Activated naive CD4-positive, alpha-beta T cell treated with anti-CD3 and anti-CD28 coated beads for 36 hours (primary cell): ENCODE measurements at regions of chr13 and their contacts with region 1.

Region 1: GRCh38 chr13:99307648-99308339 is 595 bp upstream of the GPR183 start:
- DNase-seq: peak; percentile 89
- H3K4me3 Mint-ChIP-seq: peak overlapping the region; percentile 93
- H3K27ac Mint-ChIP-seq: peak overlapping the region; percentile 99
- H3K4me1 Mint-ChIP-seq: peaks cover 73% of the 10 kb centered on the region
- H3K27me3 Mint-ChIP-seq: no peaks in the 10 kb centered on the region

Region 2: DNA sequence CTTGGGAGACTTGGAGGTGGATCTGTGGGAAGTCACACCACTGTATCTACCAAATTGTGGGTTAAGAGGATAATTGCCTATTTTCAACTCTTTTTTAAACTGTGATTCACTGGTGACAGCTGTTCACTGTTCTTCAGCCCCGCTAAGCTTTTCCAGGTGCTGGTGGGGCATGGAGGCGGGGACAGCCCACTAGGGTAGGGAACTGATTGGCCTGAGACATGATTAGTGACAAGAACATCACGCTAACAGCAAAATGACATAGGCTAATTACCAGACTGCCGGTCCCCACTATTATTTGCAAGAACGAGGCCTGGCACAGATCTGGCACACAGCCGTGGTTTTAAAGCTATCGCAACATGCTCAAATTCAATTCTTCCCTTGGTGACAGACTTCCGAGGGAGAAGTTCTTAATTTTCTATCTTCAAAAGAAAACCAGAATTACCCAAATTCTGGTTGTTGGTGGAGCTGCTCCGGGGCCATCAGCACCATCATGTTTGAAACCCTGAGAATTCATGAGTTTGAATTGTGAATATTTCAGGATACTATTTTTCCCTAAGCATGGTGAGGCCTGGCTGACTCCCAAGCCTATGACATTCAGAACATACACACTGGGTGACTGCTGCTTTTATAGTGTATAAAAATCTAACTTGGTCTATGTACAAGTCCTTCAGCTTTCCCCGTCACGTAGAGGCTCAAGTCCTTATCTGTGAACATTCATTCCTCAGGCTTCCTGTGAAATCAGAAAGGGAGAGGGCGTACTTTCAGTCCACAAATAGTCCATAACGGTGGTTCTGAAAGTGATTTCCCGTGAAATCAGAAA is 347.8 kb before region 1 on chr13:
- CTCF ChIA-PET with region 1: no interaction called
- intact Hi-C with region 1: no loop called
- DNase-seq: no peak
- H3K4me3 Mint-ChIP-seq: no peak overlapping the region
- H3K27ac Mint-ChIP-seq: no peak overlapping the region
- H3K4me1 Mint-ChIP-seq: peaks cover 11% of the 10 kb centered on the region
- H3K27me3 Mint-ChIP-seq: no peaks in the 10 kb centered on the region

Region 3: DNA sequence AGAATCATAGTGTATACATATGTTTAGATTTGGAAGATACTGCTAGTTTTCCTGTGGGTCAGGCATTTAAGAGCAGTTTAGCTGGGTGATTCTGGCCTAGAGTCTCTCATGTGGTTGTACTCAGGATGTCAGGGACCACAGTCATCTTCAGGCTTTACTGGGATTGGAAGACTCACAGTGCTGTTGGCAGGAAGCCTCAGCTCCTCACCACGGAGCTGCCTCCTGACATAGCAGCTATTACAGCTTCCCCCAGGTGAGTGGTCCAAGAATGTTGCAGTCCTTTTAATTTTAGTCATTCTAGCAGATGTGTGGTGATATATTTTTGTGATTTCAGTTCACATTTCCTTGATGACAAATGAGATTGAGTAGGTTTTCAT is 32.7 kb before region 1 on chr13:
- CTCF ChIA-PET with region 1: interaction called, 21 read pairs
- intact Hi-C with region 1: loop called (anchors 1 kb)
- DNase-seq: peak; percentile 76
- H3K4me3 Mint-ChIP-seq: no peak overlapping the region
- H3K27ac Mint-ChIP-seq: peak overlapping the region; percentile 54
- H3K4me1 Mint-ChIP-seq: peaks cover 93% of the 10 kb centered on the region
- H3K27me3 Mint-ChIP-seq: no peaks in the 10 kb centered on the region

Region 4: GRCh38 chr13:99296398-99296797 is 11.4 kb before region 1 on chr13:
- CTCF ChIA-PET with region 1: interaction called, 7 read pairs
- intact Hi-C with region 1: loop called (anchors 1 kb)
- DNase-seq: no peak
- H3K4me3 Mint-ChIP-seq: peak overlapping the region; percentile 48
- H3K27ac Mint-ChIP-seq: peak overlapping the region; percentile 87
- H3K4me1 Mint-ChIP-seq: peaks cover 75% of the 10 kb centered on the region
- H3K27me3 Mint-ChIP-seq: no peaks in the 10 kb centered on the region

Region 5: DNA sequence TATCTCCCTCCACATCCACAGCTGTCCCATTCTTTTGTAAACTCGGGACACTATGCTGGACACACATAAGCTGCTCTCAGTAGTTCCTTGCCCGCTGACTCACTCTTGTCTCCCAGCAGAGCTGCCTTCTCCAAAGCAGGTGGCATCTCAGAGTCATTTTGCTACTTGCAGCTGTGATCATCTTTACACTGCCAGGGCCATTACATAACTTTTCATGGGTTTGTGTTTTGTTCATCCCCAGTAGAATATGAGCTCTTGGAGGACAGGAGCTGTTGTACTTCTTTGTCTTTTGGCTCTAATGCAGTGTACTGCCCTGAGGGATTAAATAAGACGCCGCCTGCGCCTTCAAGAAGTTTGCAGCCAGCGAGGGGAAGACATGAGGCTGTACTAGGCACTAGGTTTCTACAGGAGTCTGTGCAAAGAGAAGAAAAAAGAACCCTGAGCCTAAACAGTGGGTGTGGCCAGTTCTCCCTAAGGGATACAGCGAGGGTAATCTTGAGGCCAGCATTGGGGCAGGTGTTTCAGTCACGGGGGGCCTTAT is 40.2 kb after region 1 on chr13:
- CTCF ChIA-PET with region 1: interaction called, 5 read pairs
- intact Hi-C with region 1: loop called (anchors 1 kb)
- DNase-seq: peak; percentile 56
- H3K4me3 Mint-ChIP-seq: no peak overlapping the region
- H3K27ac Mint-ChIP-seq: peak overlapping the region; percentile 6
- H3K4me1 Mint-ChIP-seq: peaks cover 64% of the 10 kb centered on the region
- H3K27me3 Mint-ChIP-seq: no peaks in the 10 kb centered on the region